ENCODE measurements at regions of chr15 and their contacts with region 1.

Region 1: DNA sequence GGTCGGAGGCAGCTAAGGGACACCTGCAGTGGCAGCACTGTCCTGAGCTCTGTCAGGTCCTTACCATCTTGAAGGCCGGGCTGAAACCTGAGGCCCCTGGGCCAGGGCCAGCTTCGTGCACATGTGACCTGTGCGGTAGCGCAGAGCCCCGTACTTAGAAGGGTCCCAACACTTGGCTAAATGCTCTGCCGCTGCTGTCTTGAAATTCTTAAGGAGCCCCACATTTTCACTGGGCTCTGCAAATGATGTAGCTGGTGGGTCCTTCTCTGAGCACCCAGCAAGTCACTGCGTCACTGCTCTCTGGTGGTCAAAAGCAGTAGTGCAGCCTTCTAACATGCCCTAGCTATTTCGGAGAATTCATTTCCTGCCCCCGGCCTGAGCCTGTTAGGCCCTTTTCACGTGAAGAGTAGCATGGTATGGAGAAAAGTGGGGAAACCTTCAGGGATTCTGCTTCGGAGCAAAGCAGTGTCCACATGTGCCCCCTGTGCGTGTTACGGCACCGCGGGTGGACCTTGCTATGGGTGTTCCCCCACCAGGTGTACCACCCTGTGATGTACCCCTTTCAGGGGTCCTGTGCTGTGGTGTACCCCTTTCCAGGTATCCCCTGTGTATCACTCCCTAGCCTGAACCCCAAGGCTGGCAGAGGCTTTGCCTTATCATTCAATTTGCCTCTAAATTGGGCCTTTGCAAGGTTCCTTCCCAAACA is 79.7 kb downstream of the TMEM266 start:
- DNase-seq: peak; percentile 63 to 70
- ATAC-seq: peak; percentile 83 to 96 (median 90)
- H3K4me3 ChIP-seq: no peak overlapping the region
- H3K27ac ChIP-seq: no peak overlapping the region
- H3K4me1 ChIP-seq: peaks cover 4% of the 10 kb centered on the region
- H3K27me3 ChIP-seq: no peaks in the 10 kb centered on the region
- CTCF ChIP-seq: peak; percentile 97

Region 2: GRCh38 chr15:74781431-74782258 is 1357.9 kb before region 1 on chr15 and contains the start of gene CSK:
- intact Hi-C with region 1: no loop called
- DNase-seq: peak; percentile 82 to 90
- ATAC-seq: peak; percentile 69 to 72 (median 70)
- H3K4me3 ChIP-seq: peak within 1 kb of the TSS; percentile 86
- H3K27ac ChIP-seq: peak within 1 kb of the TSS; percentile 79
- H3K4me1 ChIP-seq: peaks cover 47% of the 10 kb centered on the region
- H3K27me3 ChIP-seq: no peaks in the 10 kb centered on the region
- CTCF ChIP-seq: peak; percentile 85
- total RNA-seq, gene CSK: 15.5 to 23.8 (median 17.9) TPM

Region 3: DNA sequence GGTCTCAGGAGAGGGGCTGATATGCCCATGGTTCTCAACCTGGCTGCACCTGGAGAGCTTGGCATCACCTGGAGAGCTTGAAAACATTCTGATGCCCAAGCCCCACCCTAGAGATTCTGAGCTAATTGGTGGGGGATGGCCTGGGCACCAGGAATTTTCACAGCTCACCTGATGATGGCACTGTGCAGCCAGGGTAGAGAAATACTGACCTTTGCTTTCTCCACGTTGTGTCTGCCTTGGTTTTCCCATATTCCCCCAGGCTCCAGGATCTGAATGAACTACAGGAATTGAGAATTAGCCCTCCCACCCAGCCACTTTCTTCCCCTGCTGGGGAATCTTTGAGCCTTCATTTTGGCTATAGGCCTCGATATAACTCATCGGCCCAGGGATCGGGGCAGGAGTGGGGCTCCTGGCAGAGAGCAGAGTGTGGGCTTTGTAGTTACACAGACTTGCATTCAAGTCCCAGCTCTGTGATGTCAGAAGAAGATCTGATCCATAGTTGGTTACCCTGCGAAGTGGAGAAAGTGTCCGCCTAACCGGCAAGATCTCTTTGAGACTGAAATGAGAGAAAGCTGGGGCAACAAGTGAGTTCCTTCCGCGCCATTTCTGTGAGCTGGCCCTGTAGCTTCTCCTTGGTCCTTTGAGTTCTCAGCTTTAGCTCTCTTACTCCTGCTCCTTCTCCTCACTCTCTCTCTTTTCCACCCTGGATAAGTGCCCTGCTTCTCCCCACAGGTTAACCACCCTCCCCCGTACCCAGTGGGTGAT is 329.4 kb before region 1 on chr15:
- intact Hi-C with region 1: loop called in 1 of 2 experiments (anchors 10 kb)
- DNase-seq: no peak
- ATAC-seq: peak in 3 of 4 donors; percentile 49 to 69 (median 60)
- H3K4me3 ChIP-seq: no peak overlapping the region
- H3K27ac ChIP-seq: no peak overlapping the region
- H3K4me1 ChIP-seq: no peaks in the 10 kb centered on the region
- H3K27me3 ChIP-seq: no peaks in the 10 kb centered on the region
- CTCF ChIP-seq: peak; percentile 36

Region 4: DNA sequence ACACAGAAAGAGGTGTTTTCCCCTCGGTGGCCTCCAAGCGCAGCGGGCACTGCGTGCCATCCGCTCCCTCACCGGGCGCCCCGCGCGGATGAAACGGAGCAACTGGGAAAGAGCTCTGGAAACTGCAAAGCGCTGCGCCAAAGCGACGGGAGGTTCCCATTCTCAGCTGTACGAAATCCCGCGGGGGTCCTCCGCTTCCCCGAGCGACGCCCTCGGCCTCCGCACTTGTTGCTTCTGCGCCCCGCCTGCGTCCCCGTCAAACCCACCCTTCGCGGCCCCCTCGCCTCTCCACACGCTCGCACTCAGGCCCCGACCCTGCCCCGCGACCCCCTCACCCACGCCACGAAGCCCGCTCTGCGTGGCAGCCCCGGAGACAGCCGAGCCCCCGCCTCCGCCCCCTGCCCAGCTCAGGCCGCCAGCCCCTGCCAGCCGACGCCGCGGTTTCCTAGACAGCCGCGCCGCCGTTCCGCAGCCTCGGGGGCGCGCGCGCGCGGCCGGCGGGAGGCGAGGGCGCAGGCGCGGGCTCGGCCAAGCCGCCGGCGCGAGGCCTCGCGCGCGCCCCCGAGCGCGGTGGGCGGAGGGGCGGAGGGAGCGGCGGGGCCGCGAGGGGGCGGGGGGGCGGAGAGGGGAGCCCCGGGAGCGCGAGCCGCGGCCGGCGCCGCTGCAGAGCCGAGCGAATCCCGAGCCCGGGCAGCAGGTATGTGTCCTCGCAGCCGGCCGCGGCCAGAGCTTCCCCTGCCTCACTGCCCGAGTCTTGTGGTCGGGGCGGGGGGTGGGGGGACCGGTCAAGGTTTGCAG is 80.0 kb before region 1 on chr15 and contains the start of gene TMEM266:
- intact Hi-C with region 1: loop called (anchors 1 to 2 kb)
- DNase-seq: peak; percentile 40 to 75
- ATAC-seq: peak; percentile 74 to 81 (median 78)
- H3K4me3 ChIP-seq: peak within 1 kb of the TSS; percentile 77
- H3K27ac ChIP-seq: peak within 1 kb of the TSS; percentile 65
- H3K4me1 ChIP-seq: peaks cover 20% of the 10 kb centered on the region
- H3K27me3 ChIP-seq: peaks cover 0 to 13% (median 0%) of the 10 kb centered on the region in 3 donors
- CTCF ChIP-seq: no peak
- total RNA-seq, gene TMEM266: 2.6 to 7.9 (median 4.4) TPM

Measured in psoas muscle (tissue), 8 donors.